Uterus (tissue), 4 donors: ENCODE measurements at regions of chr11 and their contacts with region 1.

Region 1: DNA sequence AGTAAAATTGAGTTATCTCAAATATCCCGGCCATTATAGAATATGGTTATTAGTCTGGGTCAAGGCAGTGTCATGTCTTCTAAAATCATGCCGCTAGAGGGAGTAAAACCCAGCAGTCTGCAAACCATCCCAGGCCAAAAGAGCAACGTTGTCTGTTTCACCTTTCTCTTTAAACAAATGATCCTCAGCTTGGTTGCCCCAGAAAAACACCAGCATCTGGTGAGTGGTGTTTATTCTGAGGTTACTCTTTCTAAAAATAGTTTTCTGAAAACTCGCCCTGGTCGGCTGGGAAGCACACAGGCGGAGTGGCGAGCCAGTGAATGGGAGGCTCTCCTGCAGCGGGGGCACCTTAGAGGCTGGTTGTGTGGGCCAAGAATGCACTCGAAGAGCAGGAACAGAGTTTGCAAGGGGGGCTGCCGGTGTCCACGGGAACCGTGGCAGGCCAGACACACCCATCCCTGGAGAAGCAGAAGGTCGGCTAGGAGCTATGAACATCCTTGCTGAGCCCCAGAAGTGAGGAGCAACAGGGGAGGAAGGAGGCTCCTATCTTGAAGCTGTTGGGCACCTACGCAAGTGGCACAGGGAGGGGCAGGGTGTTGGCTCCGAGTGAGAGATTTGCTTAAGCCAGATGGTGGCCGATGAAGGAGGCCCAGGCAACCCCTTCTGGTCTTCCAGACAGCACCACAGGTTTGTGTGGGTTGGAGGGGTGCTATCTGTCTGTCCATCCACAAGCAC is 297.1 kb downstream of the ETS1 start:
- DNase-seq: peak; percentile 48 to 67
- H3K4me3 ChIP-seq: no peak overlapping the region
- H3K27ac ChIP-seq: peak overlapping the region; percentile 43 to 44
- H3K4me1 ChIP-seq: no peaks in the 10 kb centered on the region
- H3K27me3 ChIP-seq: no peaks in the 10 kb centered on the region
- CTCF ChIP-seq: peak; percentile 79 to 86 (median 84)
- POLR2A ChIP-seq: no peak

Region 2: DNA sequence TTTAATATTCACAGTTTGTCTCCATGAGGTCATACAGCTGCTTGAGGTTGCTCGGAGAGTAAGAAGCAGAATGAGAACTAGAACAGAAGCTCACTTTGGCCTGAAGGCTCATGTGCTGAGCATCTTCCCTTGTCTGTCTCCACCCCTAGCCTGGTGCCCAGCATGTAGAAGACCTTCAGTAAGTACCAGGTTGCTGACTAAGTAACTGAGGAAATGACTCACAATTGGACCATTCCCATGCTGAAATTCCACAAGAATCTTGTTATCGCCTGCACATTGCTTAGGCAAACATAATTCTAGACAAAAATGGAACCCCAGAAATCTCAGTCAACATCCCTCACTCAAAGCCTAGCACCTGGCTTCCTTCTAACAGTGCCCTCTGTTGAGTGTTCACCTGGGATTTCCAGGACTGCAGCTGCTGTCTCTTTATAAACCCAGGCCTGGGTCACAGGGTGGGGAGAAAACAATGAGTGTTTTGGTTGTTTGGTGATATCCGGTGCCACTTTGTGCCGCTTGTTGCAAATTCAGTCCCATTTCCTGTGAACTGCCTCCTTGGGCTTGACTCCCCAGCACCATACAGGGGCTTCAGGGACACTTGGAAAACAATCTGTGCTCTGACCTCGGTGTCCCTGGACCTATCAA is 109.7 kb before region 1 on chr11:
- intact Hi-C with region 1: no loop called
- DNase-seq: no peak
- H3K4me3 ChIP-seq: no peak overlapping the region
- H3K27ac ChIP-seq: no peak overlapping the region
- H3K4me1 ChIP-seq: no peaks in the 10 kb centered on the region
- H3K27me3 ChIP-seq: no peaks in the 10 kb centered on the region
- CTCF ChIP-seq: no peak
- POLR2A ChIP-seq: no peak

Region 3: GRCh38 chr11:128630367-128631230 is 340.3 kb after region 1 on chr11:
- intact Hi-C with region 1: loop called (anchors 5 kb)
- DNase-seq: peak; percentile 89
- H3K4me3 ChIP-seq: no peak overlapping the region
- H3K27ac ChIP-seq: peak overlapping the region; percentile 21 to 25
- H3K4me1 ChIP-seq: no peaks in the 10 kb centered on the region
- H3K27me3 ChIP-seq: no peaks in the 10 kb centered on the region
- CTCF ChIP-seq: peak; percentile 82 to 92 (median 88)
- POLR2A ChIP-seq: peak in 1 of 2 donors; percentile 14